Activated B cell treated with CpG ODN at 0.5 μM for 24 hours (primary cell): ENCODE measurements at regions of chr1 and their contacts with region 1.

Region 1: GRCh38 chr1:93179886-93180722 is at the start of gene TMED5:
- DNase-seq: peak; percentile 93
- ATAC-seq: peak; percentile 84
- H3K4me3 Mint-ChIP-seq: peak within 1 kb of the TSS; percentile 94
- H3K27ac Mint-ChIP-seq: peak within 1 kb of the TSS; percentile 96
- H3K4me1 Mint-ChIP-seq: peaks cover 51% of the 10 kb centered on the region
- H3K27me3 Mint-ChIP-seq: no peaks in the 10 kb centered on the region
- CTCF ChIP-seq: no peak
- total RNA-seq, gene TMED5: 38.7 and 42.3 TPM in 2 replicates

Region 2: GRCh38 chr1:92298573-92299476 is 881.3 kb before region 1 on chr1 and contains the starts of genes GLMN and RPAP2:
- CTCF ChIA-PET with region 1: no interaction called
- POLR2A ChIA-PET with region 1: no interaction called
- intact Hi-C with region 1: loop called (anchors 10 kb)
- DNase-seq: peak; percentile 82
- ATAC-seq: peak; percentile 96
- H3K4me3 Mint-ChIP-seq: peak within 1 kb of the TSS; percentile 99
- H3K27ac Mint-ChIP-seq: peak within 1 kb of the TSS; percentile 99
- H3K4me1 Mint-ChIP-seq: peaks cover 31% of the 10 kb centered on the region
- H3K27me3 Mint-ChIP-seq: no peaks in the 10 kb centered on the region
- CTCF ChIP-seq: no peak
- total RNA-seq, gene GLMN: 11.1 and 14.7 TPM in 2 replicates
- total RNA-seq, gene RPAP2: 27.1 and 31.7 TPM in 2 replicates

Region 3: DNA sequence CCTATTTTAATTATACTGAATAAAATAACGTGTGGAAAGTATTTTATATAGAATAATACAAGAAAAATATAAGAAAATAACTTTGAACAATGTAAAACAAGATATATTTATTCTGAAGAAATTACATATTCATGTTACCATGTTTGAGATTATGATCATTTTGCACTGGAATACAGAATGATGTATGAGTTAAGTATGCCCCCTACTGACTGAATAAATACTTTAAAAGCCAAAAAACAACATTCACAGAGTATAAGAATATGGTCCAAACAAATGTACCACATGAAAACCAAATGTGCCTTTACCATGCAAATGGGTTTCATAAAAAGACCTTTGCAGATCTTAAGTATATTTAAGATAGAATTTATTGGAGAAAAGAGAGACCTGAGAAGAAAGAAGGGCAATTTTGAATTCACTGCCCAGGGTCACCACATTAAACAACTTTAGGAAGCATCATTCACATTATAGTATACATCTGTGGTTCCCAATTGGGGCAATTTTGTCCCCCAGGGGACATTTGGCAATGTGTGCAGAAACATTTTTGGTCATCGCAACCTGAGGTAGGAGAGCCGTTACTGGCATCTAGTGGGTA is 556.8 kb before region 1 on chr1:
- CTCF ChIA-PET with region 1: no interaction called
- POLR2A ChIA-PET with region 1: no interaction called
- intact Hi-C with region 1: no loop called
- DNase-seq: no peak
- ATAC-seq: no peak
- H3K4me3 Mint-ChIP-seq: no peak overlapping the region
- H3K27ac Mint-ChIP-seq: no peak overlapping the region
- H3K4me1 Mint-ChIP-seq: no peaks in the 10 kb centered on the region
- H3K27me3 Mint-ChIP-seq: no peaks in the 10 kb centered on the region
- CTCF ChIP-seq: no peak

Region 4: DNA sequence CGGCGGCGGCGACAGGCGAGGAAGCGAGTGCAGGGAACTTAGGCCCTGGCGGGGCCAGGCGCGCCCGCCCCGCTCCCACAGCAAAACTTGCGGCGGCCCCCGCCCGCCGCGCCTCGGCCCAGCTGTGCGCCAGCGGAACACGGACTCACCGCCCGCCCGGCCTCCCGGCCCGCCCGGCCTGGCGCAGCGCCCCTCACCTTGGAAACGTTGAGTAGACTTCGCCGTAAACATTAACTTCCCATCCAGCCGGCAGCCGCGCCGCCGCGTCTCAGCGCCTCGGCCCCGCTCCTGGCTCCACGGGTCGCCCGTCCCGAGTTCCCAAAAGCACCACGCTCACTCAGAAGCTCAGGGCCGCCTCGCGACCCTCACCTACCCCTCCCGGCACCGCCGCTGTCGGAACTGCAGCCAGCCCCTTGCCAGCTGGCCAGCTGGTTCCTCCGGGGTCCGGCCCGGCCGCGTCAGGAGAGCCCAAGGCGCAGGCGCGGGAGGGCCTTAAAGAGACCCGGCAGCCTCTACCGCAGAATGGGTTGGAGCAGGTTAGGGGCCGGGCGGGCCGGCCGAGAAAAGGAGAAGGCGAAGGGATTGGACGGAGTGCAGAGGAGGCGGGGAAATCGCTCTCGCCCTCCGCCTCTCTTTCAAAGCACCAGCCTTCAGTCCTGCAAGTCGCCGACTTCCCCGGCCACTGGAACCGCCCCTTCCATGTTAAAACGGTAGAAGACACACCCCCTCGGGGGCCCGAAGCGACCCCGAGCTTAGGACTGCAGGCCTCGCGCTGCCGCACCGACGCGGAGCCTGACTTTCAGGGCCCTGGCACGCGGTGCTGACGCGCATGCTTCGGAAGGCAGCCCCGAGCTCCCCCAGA is 395.2 kb before region 1 on chr1 and contains the start of gene EVI5:
- CTCF ChIA-PET with region 1: no interaction called
- POLR2A ChIA-PET with region 1: no interaction called
- intact Hi-C with region 1: loop called (anchors 5 kb)
- DNase-seq: peak; percentile 86
- ATAC-seq: peak; percentile 92
- H3K4me3 Mint-ChIP-seq: peak within 1 kb of the TSS; percentile 92
- H3K27ac Mint-ChIP-seq: peak within 1 kb of the TSS; percentile 91
- H3K4me1 Mint-ChIP-seq: peaks cover 31% of the 10 kb centered on the region
- H3K27me3 Mint-ChIP-seq: no peaks in the 10 kb centered on the region
- CTCF ChIP-seq: no peak
- total RNA-seq, gene EVI5: 18.2 and 27.4 TPM in 2 replicates

Region 5: DNA sequence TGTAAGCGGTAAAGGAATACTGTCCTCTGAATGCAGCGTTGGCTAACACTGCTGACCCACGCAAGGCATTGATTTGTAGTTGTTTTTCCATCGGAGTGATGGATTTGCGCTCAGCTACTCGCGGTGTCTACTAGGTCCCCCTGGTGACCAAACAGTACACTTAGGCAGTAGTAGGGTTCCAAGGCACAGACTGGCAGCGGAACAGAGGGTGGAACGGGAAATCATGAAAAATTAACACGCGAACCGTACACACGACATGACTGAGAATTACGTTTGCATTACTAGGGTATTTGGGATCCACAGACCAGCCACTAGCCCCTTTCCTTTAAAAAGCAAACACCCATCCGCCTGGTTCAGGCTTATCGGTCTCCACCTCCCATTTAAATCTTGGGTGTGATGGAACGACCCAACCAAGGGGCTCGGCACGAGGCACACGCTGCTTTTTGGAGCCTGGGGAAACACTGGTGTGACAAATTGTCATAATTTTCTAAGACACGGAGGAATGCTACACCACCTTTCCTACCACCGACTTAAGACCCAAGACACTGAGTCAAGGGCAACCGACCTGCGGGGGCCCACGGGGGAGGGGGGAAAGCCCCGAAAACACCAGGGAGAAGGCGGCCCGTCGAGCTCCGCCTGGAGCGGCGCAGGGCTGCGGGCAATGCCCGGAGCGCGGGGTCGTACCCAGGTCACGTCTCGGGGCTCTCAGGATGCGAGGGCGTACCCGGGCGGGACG is 219.5 kb before region 1 on chr1:
- CTCF ChIA-PET with region 1: no interaction called
- POLR2A ChIA-PET with region 1: interaction called, 5 read pairs
- intact Hi-C with region 1: loop called (anchors 1 kb)
- DNase-seq: no peak
- ATAC-seq: peak; percentile 49
- H3K4me3 Mint-ChIP-seq: peak overlapping the region; percentile 96
- H3K27ac Mint-ChIP-seq: peak overlapping the region; percentile 98
- H3K4me1 Mint-ChIP-seq: peaks cover 46% of the 10 kb centered on the region
- H3K27me3 Mint-ChIP-seq: no peaks in the 10 kb centered on the region
- CTCF ChIP-seq: no peak

Region 6: DNA sequence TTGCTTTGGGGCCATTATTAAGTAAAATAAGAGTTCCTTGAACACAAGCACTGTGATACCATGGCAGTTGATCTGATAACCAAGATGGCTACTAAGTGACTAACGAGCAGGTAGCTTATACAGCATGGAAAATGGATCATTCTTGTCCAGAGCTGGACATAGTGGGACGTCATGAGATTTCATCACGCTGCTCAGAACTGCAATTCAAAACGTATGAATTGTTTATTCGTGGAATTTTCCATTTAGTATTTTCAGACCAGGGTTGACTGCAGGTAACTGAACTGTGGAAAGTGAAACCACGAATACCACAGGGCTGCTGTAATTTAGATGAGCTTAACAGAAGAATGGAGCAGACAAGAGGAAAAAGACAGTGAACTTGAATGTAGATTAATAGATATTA is 39.3 kb after region 1 on chr1:
- CTCF ChIA-PET with region 1: no interaction called
- POLR2A ChIA-PET with region 1: no interaction called
- intact Hi-C with region 1: loop called (anchors 2 kb)
- DNase-seq: no peak
- ATAC-seq: peak; percentile 72
- H3K4me3 Mint-ChIP-seq: peak overlapping the region; percentile 65
- H3K27ac Mint-ChIP-seq: peak overlapping the region; percentile 61
- H3K4me1 Mint-ChIP-seq: peaks cover 27% of the 10 kb centered on the region
- H3K27me3 Mint-ChIP-seq: no peaks in the 10 kb centered on the region
- CTCF ChIP-seq: no peak

Region 7: GRCh38 chr1:93708734-93709481 is 528.8 kb after region 1 on chr1:
- CTCF ChIA-PET with region 1: no interaction called
- POLR2A ChIA-PET with region 1: no interaction called
- intact Hi-C with region 1: loop called (anchors 10 kb)
- DNase-seq: no peak
- ATAC-seq: no peak
- H3K4me3 Mint-ChIP-seq: peak overlapping the region; percentile 72
- H3K27ac Mint-ChIP-seq: peak overlapping the region; percentile 90
- H3K4me1 Mint-ChIP-seq: peaks cover 68% of the 10 kb centered on the region
- H3K27me3 Mint-ChIP-seq: no peaks in the 10 kb centered on the region
- CTCF ChIP-seq: no peak

Region 8: DNA sequence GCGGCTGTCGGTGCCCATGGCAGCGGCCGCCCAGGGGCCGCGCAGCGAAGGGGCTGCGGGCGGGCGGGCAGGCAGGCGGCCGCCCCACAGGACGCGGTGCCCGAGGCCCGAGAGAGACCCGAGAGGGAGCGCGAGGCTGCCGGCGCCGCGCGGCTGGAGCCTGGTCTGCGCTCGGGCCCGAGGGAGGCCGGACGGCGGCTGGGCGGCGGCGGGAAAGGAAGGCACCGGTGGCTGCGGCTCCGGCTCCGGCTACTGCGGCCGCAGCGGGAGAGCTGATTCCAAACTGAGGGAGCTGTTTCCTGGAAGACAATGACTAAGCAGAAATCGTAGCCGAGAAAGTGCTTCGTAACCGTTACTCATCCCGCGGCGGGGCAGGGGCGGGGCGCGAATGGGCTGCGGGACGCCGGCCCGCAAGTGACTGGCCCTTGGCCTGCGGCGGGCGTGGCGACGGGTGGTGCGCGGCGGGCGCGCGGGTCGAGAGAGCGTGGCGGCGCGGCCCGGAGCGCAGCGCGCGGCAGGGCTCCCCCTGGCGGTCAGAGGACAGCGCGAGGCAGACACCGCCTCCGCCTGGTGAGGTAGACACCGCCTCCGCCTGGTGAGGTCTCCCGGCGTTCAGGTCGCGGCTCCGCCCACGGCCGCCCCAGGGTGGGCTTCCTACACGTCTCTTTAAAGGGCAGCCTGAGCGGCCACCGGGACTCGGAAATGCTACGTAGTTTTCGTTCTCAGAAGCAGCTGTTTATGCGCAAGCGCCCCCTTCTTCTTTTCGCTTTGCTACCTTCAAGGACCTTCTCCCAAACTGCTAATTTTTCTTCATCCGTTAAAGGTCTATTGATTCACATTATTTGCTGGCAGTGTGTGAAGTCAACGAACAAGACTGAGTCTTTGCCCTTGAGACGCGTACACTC is 729.3 kb after region 1 on chr1 and contains the start of gene GCLM:
- CTCF ChIA-PET with region 1: no interaction called
- POLR2A ChIA-PET with region 1: no interaction called
- intact Hi-C with region 1: loop called (anchors 2 kb)
- DNase-seq: peak; percentile 95
- ATAC-seq: peak; percentile 92
- H3K4me3 Mint-ChIP-seq: peak within 1 kb of the TSS; percentile 89
- H3K27ac Mint-ChIP-seq: peak within 1 kb of the TSS; percentile 87
- H3K4me1 Mint-ChIP-seq: peaks cover 25% of the 10 kb centered on the region
- H3K27me3 Mint-ChIP-seq: no peaks in the 10 kb centered on the region
- CTCF ChIP-seq: peak; percentile 48
- total RNA-seq, gene GCLM: 8.6 and 9.6 TPM in 2 replicates